B cell (primary cell): ENCODE measurements at regions of chr1 and their contacts with region 1.

Region 1: DNA sequence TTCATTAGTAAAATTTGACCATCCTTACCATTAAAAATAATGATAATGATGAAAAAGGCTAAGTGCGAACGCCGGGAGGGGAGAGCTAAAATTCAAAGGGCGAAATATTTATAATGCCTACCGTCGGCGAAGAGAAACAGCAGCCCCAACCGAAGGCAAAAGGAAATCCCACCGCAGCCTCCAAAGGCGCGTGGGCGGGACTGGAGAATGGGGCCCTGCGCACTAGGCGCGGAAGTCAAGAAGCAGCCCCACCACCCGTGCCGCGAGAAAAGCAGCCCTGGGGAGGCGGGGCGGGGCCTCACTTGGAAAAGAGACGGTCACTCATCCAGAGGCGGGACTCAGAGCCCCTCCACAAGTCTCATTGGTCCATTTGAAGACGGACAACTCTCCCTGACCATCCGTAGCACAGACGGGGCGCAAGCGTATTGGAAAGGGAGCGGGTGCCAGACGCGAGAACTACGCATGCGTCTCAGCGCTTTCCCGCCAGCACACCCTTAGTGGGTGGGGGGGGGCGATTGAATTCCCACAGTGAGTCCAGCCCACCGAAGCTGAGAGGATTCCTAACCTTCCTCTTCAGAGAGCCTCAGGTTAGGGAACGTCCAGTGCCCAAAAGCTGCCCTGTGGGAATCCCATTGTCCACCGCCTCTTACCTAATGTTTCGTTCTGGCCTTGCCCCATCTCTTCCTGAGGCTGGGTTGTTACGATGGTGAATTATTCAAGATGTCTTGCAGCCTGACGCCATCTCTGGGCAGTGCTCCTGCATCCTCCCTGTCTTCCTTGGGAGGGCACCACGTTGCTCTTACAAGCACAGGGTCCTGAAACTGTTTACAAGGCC is 19.0 kb downstream of the MTX1 start:
- DNase-seq: peak; percentile 98
- ATAC-seq: peak; percentile 97
- H3K4me3 ChIP-seq: peak overlapping the region; percentile 61 to 93 (median 68)
- H3K4me3 Mint-ChIP-seq: peak overlapping the region; percentile 85
- H3K27ac ChIP-seq: peak overlapping the region; percentile 70
- H3K27ac Mint-ChIP-seq: peak overlapping the region; percentile 91
- H3K4me1 ChIP-seq: peaks cover 43 to 56% of the 10 kb centered on the region in 2 donors
- H3K4me1 Mint-ChIP-seq: peaks cover 43% of the 10 kb centered on the region
- H3K27me3 ChIP-seq: no peaks in the 10 kb centered on the region
- H3K27me3 Mint-ChIP-seq: no peaks in the 10 kb centered on the region
- CTCF ChIP-seq: no peak

Region 2: GRCh38 chr1:155158979-155159378 is 68.5 kb before region 1 on chr1:
- CTCF ChIA-PET with region 1: no interaction called
- POLR2A ChIA-PET with region 1: no interaction called
- intact Hi-C with region 1: no loop called
- DNase-seq: no peak
- ATAC-seq: no peak
- H3K4me3 ChIP-seq: no peak overlapping the region
- H3K4me3 Mint-ChIP-seq: no peak overlapping the region
- H3K27ac ChIP-seq: no peak overlapping the region
- H3K27ac Mint-ChIP-seq: no peak overlapping the region
- H3K4me1 ChIP-seq: no peaks in the 10 kb centered on the region
- H3K4me1 Mint-ChIP-seq: no peaks in the 10 kb centered on the region
- H3K27me3 ChIP-seq: no peaks in the 10 kb centered on the region
- H3K27me3 Mint-ChIP-seq: no peaks in the 10 kb centered on the region
- CTCF ChIP-seq: no peak

Region 3: DNA sequence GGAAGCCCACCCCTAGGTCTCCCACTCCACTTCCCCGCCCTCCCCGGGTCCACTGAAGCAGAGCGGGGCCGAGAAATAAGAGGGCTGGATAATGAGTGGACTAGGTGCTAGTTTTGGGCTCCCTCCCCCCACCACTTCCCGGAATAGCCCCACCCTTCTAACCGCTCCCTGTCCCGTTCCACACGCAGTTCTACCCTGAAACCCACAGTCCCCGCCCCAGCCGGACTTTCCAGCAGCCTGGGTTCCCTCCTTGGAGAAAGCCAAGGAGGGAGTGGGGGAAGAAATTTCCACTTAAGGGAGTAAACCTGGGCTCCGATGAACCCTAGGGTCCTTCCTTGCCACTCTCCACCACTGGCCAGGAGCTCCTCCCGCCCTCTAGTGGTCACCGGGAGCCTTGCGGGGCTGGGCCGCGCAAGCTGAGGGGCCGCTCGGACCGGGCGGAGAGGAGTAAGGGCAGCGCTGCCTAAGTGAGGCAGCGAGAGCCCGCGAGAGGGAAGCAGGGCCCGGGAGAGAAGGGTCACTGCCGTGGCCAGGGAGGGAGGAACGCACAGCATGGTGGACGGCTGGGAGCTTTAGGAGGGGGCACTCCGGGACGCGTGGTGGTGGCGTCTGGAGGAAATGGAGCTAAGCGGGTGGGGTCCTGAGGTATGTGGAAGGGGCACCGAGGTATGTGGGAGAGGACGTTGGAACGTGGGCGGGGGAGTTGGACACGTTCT is 34.0 kb before region 1 on chr1:
- CTCF ChIA-PET with region 1: interaction called, 20 read pairs
- POLR2A ChIA-PET with region 1: interaction called, 5 read pairs
- intact Hi-C with region 1: loop called (anchors 5 kb)
- DNase-seq: peak; percentile 82
- ATAC-seq: peak; percentile 72
- H3K4me3 ChIP-seq: peak overlapping the region; percentile 44 to 74 (median 50)
- H3K4me3 Mint-ChIP-seq: peak overlapping the region; percentile 91
- H3K27ac ChIP-seq: no peak overlapping the region
- H3K27ac Mint-ChIP-seq: peak overlapping the region; percentile 89
- H3K4me1 ChIP-seq: peaks cover 15 to 23% of the 10 kb centered on the region in 2 donors
- H3K4me1 Mint-ChIP-seq: peaks cover 30% of the 10 kb centered on the region
- H3K27me3 ChIP-seq: peaks cover 0 to 19% (median 1%) of the 10 kb centered on the region in 4 experiments
- H3K27me3 Mint-ChIP-seq: no peaks in the 10 kb centered on the region
- CTCF ChIP-seq: peak; percentile 94

Region 4: DNA sequence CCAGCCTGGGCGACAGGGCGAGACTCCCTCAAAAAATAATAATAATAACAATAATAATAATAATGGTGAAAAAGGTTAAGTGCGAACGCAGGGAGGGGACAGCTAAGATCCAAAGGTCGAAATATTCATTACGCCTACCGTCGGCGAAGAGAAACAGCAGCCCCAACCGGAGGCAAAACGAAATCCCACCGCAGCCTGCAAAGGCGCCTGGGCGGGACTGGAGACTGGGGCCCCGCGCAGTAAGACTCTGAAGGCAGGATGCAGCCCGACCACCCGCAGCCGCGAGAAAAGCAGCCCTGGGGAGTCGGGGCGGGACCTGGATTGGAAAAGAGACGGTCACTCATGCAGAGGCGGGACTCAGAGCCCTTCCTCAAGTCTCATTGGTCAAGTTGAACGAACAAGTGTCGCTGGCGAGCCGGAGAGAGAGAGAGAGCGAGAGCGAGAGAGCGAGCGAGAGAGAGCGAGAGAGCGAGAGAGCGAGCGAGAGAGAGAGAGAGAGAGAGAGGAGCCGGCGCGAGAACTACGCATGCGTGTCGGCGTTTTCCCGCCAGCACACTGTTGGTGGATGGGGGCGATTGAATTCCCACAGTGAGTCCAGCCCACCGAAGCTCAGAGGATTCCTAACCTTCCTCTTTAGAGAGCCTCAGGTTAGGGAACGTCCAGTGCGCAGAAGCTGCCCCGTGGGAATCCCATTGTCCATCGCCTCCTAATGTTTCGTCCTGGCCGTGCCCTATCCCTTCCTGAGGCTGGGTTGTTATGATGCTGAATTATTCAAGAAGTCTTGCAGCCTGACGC is 17.1 kb after region 1 on chr1:
- CTCF ChIA-PET with region 1: interaction called, 12 read pairs
- POLR2A ChIA-PET with region 1: interaction called, 4 read pairs
- intact Hi-C with region 1: loop called (anchors 1 kb)
- DNase-seq: peak; percentile 95
- ATAC-seq: peak; percentile 97
- H3K4me3 ChIP-seq: peak overlapping the region; percentile 60 to 79 (median 67)
- H3K4me3 Mint-ChIP-seq: peak overlapping the region; percentile 82
- H3K27ac ChIP-seq: peak overlapping the region; percentile 62 to 71
- H3K27ac Mint-ChIP-seq: peak overlapping the region; percentile 96
- H3K4me1 ChIP-seq: peaks cover 27 to 36% of the 10 kb centered on the region in 2 donors
- H3K4me1 Mint-ChIP-seq: peaks cover 33% of the 10 kb centered on the region
- H3K27me3 ChIP-seq: no peaks in the 10 kb centered on the region
- H3K27me3 Mint-ChIP-seq: peaks cover 4% of the 10 kb centered on the region
- CTCF ChIP-seq: peak; percentile 45